CD4-positive, alpha-beta T cell (primary cell): ENCODE measurements at regions of chr7 and their contacts with region 1.

Region 1: DNA sequence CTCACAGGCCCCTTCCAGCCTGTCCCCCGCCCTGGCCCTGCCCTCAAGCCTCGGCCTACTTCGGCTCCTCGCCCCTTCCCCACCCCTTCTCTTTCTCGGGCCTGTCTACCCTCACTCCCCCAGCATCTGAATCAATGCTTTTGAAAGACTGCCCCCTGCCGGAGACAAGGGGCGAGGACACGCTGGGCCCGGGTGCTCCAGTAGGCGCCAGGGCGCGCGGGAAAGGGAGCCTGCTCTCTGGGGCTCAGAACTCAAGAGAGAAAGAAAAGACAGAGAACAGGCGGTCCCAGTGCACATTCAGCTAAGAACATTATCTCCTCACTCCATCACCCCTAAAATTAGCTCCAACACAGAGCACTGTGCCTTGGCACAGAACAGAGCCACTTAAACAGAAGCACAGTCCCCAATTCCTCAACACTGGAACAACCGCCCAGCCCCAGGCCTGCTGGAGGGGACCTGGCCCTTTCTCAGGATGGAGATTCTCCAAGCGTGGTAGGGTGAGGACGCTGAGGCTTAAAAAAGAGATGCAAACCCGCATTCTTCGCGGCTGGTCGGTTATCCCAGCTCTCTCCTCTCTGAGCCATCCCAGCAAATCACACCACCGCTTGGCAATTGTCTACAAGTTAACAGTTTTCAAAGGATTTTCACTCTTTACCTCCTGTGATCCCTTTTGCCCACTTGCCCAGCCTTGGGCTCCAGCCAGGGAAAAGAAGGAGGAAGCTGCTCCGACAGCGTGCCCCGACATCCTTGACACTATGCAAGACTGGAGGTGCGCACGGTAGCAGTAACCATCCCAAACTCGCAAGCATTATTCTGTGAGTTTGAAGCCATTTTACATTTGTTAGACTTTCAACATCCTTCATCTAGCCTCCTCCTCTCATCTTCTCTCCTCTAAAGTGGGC is 2.1 kb downstream of the GIGYF1 start:
- DNase-seq: peak; percentile 71 to 91 (median 79)
- ATAC-seq: peak; percentile 77
- H3K4me3 ChIP-seq: peak overlapping the region; percentile 75
- H3K4me3 Mint-ChIP-seq: peak overlapping the region; percentile 97
- H3K27ac ChIP-seq: no peak overlapping the region
- H3K27ac Mint-ChIP-seq: peak overlapping the region; percentile 85
- H3K4me1 ChIP-seq: peaks cover 62% of the 10 kb centered on the region
- H3K4me1 Mint-ChIP-seq: peaks cover 34% of the 10 kb centered on the region
- H3K27me3 ChIP-seq: no peaks in the 10 kb centered on the region
- H3K27me3 Mint-ChIP-seq: no peaks in the 10 kb centered on the region
- CTCF ChIP-seq: peak; percentile 87

Region 2: GRCh38 chr7:100478966-100479665 is 212.8 kb before region 1 on chr7 and contains the start of gene TSC22D4:
- CTCF ChIA-PET with region 1: no interaction called
- POLR2A ChIA-PET with region 1: no interaction called
- intact Hi-C with region 1: loop called in 1 of 2 experiments (anchors 5 kb)
- DNase-seq: peak; percentile 85 to 97 (median 93)
- ATAC-seq: peak; percentile 75
- H3K4me3 ChIP-seq: peak within 1 kb of the TSS; percentile 100
- H3K4me3 Mint-ChIP-seq: peak within 1 kb of the TSS; percentile 97
- H3K27ac ChIP-seq: peak within 1 kb of the TSS; percentile 73 to 84
- H3K27ac Mint-ChIP-seq: peak within 1 kb of the TSS; percentile 83
- H3K4me1 ChIP-seq: peaks cover 70% of the 10 kb centered on the region
- H3K4me1 Mint-ChIP-seq: peaks cover 49% of the 10 kb centered on the region
- H3K27me3 ChIP-seq: no peaks in the 10 kb centered on the region
- H3K27me3 Mint-ChIP-seq: no peaks in the 10 kb centered on the region
- CTCF ChIP-seq: no peak
- total RNA-seq, gene TSC22D4: 34.6 to 36.5 TPM

Region 3: GRCh38 chr7:100604028-100604975 is 87.6 kb before region 1 on chr7:
- CTCF ChIA-PET with region 1: interaction called, 7 read pairs
- POLR2A ChIA-PET with region 1: interaction called, 3 read pairs
- intact Hi-C with region 1: loop called in 1 of 2 experiments (anchors 1 kb)
- DNase-seq: peak; percentile 57 to 90 (median 69)
- ATAC-seq: peak; percentile 66
- H3K4me3 ChIP-seq: peak overlapping the region; percentile 86
- H3K4me3 Mint-ChIP-seq: peak overlapping the region; percentile 92
- H3K27ac ChIP-seq: peak overlapping the region; percentile 13 to 63
- H3K27ac Mint-ChIP-seq: peak overlapping the region; percentile 76
- H3K4me1 ChIP-seq: peaks cover 29% of the 10 kb centered on the region
- H3K4me1 Mint-ChIP-seq: peaks cover 23% of the 10 kb centered on the region
- H3K27me3 ChIP-seq: no peaks in the 10 kb centered on the region
- H3K27me3 Mint-ChIP-seq: no peaks in the 10 kb centered on the region
- CTCF ChIP-seq: peak; percentile 62

Region 4: DNA sequence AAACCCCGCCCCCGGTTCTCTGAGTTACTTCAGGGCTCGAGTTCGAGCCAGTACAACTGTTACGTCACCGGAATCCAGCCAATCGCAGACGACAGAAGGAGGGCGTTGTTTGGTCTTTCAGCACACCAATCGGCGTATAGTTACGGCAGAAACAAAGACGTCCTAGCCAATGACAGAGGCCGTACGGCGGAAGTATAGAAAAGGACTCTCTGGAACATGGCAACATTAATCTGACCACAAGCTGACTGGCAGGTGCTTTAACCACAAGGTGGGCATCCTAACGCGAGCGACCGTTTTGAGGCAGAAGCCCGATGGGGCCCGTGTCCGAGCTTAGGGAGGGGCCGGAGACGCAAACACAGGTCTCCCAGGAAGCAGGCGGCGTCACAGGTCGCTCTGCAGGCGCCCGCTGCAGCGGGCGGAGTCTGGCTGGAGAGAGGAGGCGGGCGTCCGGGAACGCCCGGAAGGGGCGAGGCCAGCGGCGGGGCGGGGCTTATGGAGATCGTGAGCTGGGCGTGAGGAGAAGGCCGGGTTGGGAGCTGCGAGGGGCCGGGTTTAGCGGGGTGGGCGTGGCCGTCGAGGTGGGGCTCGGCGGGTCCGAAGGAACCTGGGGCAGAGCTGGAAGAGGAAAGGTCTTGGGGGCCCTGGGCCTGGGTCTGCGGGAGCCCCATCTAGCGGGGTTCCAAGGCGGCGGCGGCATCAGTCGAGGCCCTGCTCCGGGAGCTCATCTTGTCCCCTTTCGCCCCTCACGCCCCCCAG is 79.8 kb before region 1 on chr7 and contains the start of gene MOSPD3:
- CTCF ChIA-PET with region 1: interaction called, 22 read pairs
- POLR2A ChIA-PET with region 1: interaction called, 5 read pairs
- intact Hi-C with region 1: loop called in 1 of 2 experiments (anchors 5 kb)
- DNase-seq: peak; percentile 95 to 99 (median 98)
- ATAC-seq: peak; percentile 87
- H3K4me3 ChIP-seq: peak within 1 kb of the TSS; percentile 62
- H3K4me3 Mint-ChIP-seq: peak within 1 kb of the TSS; percentile 94
- H3K27ac ChIP-seq: peak within 1 kb of the TSS; percentile 78 to 92
- H3K27ac Mint-ChIP-seq: peak within 1 kb of the TSS; percentile 97
- H3K4me1 ChIP-seq: peaks cover 27% of the 10 kb centered on the region
- H3K4me1 Mint-ChIP-seq: peaks cover 31% of the 10 kb centered on the region
- H3K27me3 ChIP-seq: no peaks in the 10 kb centered on the region
- H3K27me3 Mint-ChIP-seq: no peaks in the 10 kb centered on the region
- CTCF ChIP-seq: no peak
- total RNA-seq, gene MOSPD3: 8.5 to 10.9 TPM

Region 5: GRCh38 chr7:100626530-100627237 is 65.2 kb before region 1 on chr7:
- CTCF ChIA-PET with region 1: interaction called, 5 read pairs
- POLR2A ChIA-PET with region 1: interaction called, 4 read pairs
- intact Hi-C with region 1: loop called in 1 of 2 experiments (anchors 2 kb)
- DNase-seq: peak; percentile 84 to 96 (median 89)
- ATAC-seq: peak; percentile 98
- H3K4me3 ChIP-seq: peak overlapping the region; percentile 52
- H3K4me3 Mint-ChIP-seq: peak overlapping the region; percentile 78
- H3K27ac ChIP-seq: peak overlapping the region; percentile 62 to 73
- H3K27ac Mint-ChIP-seq: peak overlapping the region; percentile 62
- H3K4me1 ChIP-seq: peaks cover 36% of the 10 kb centered on the region
- H3K4me1 Mint-ChIP-seq: peaks cover 26% of the 10 kb centered on the region
- H3K27me3 ChIP-seq: no peaks in the 10 kb centered on the region
- H3K27me3 Mint-ChIP-seq: no peaks in the 10 kb centered on the region
- CTCF ChIP-seq: no peak

Region 6: DNA sequence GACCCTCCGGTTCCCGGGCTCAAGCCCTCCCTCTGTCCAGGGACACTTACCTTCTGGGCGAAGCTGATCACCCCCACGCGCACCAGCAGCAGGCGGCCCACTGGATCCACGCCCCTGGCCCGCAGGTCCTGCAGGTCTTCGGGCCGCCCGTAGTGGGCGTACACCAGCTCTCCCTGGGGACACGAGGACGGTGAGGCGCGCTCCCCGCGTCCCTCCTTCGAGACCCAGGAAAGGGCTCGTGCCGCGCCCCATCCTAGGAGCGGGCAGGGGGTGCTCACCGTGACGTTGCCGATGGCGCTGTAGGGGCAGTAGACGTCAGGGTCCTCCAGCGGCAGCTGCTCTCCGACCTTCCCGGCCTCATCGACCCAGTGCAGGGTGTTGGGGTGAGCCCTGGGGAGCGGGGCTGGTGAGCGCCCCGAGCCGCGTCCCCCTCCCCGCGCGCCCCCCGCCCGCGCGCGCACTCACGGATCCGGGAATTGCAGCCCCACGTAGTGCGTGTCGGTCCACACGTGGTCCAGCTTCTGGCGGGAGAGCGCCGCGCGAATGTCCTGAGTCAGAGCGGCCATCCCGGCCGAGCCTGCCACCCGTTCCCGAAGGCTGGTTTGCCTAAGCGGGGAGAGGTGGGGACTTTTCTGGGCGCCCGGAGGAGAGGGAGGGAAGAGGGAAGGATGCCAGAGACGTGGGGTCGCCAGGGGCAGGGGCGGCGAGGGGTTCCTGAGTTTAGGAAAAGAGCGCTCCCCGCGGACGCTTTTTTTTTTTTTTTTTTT is 58.8 kb before region 1 on chr7:
- CTCF ChIA-PET with region 1: interaction called, 9 read pairs
- POLR2A ChIA-PET with region 1: interaction called, 3 read pairs
- intact Hi-C with region 1: loop called in 1 of 2 experiments (anchors 2 kb)
- DNase-seq: peak; percentile 26 to 81 (median 47)
- ATAC-seq: peak; percentile 77
- H3K4me3 ChIP-seq: peak overlapping the region; percentile 71
- H3K4me3 Mint-ChIP-seq: peak overlapping the region; percentile 87
- H3K27ac ChIP-seq: no peak overlapping the region
- H3K27ac Mint-ChIP-seq: no peak overlapping the region
- H3K4me1 ChIP-seq: peaks cover 24% of the 10 kb centered on the region
- H3K4me1 Mint-ChIP-seq: peaks cover 10% of the 10 kb centered on the region
- H3K27me3 ChIP-seq: no peaks in the 10 kb centered on the region
- H3K27me3 Mint-ChIP-seq: no peaks in the 10 kb centered on the region
- CTCF ChIP-seq: peak; percentile 33

Region 7: GRCh38 chr7:100680167-100680575 is 11.8 kb before region 1 on chr7:
- CTCF ChIA-PET with region 1: interaction called, 7 read pairs
- POLR2A ChIA-PET with region 1: interaction called, 33 read pairs
- intact Hi-C with region 1: loop called in 1 of 2 experiments (anchors 2 kb)
- DNase-seq: peak in 1 of 14 experiments; percentile 61
- ATAC-seq: no peak
- H3K4me3 ChIP-seq: no peak overlapping the region
- H3K4me3 Mint-ChIP-seq: peak overlapping the region; percentile 16
- H3K27ac ChIP-seq: peak overlapping the region; percentile 1 to 30
- H3K27ac Mint-ChIP-seq: peak overlapping the region; percentile 81
- H3K4me1 ChIP-seq: peaks cover 43% of the 10 kb centered on the region
- H3K4me1 Mint-ChIP-seq: peaks cover 46% of the 10 kb centered on the region
- H3K27me3 ChIP-seq: no peaks in the 10 kb centered on the region
- H3K27me3 Mint-ChIP-seq: no peaks in the 10 kb centered on the region
- CTCF ChIP-seq: no peak

Region 8: DNA sequence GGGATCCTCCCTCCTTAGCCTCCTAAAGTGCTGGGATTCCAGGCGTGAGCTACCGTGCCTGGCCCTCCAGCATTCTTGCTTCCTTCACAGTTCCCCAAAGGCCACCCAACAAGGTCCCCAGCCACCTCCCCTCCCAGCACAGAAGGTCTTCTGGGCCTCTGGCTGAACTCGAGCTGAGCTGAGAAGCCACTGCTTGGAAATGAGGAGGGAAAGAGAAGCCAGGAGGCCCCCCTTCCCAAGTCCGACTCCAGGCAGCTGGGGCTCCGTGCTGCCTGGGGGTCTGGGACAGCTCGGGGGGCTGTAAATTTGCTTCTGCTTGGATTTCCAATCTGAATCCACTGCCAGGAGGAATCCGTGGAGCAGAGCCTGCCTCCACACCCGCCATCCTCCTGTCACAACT is 22.8 kb after region 1 on chr7:
- CTCF ChIA-PET with region 1: no interaction called
- POLR2A ChIA-PET with region 1: no interaction called
- intact Hi-C with region 1: no loop called
- DNase-seq: no peak
- ATAC-seq: no peak
- H3K4me3 ChIP-seq: no peak overlapping the region
- H3K4me3 Mint-ChIP-seq: no peak overlapping the region
- H3K27ac ChIP-seq: no peak overlapping the region
- H3K27ac Mint-ChIP-seq: no peak overlapping the region
- H3K4me1 ChIP-seq: no peaks in the 10 kb centered on the region
- H3K4me1 Mint-ChIP-seq: no peaks in the 10 kb centered on the region
- H3K27me3 ChIP-seq: peaks cover 6% of the 10 kb centered on the region in 2 experiments
- H3K27me3 Mint-ChIP-seq: peaks cover 18% of the 10 kb centered on the region
- CTCF ChIP-seq: no peak